Endothelial cell of umbilical vein (primary cell): ENCODE measurements at regions of chr17 and their contacts with region 1.

Region 1: DNA sequence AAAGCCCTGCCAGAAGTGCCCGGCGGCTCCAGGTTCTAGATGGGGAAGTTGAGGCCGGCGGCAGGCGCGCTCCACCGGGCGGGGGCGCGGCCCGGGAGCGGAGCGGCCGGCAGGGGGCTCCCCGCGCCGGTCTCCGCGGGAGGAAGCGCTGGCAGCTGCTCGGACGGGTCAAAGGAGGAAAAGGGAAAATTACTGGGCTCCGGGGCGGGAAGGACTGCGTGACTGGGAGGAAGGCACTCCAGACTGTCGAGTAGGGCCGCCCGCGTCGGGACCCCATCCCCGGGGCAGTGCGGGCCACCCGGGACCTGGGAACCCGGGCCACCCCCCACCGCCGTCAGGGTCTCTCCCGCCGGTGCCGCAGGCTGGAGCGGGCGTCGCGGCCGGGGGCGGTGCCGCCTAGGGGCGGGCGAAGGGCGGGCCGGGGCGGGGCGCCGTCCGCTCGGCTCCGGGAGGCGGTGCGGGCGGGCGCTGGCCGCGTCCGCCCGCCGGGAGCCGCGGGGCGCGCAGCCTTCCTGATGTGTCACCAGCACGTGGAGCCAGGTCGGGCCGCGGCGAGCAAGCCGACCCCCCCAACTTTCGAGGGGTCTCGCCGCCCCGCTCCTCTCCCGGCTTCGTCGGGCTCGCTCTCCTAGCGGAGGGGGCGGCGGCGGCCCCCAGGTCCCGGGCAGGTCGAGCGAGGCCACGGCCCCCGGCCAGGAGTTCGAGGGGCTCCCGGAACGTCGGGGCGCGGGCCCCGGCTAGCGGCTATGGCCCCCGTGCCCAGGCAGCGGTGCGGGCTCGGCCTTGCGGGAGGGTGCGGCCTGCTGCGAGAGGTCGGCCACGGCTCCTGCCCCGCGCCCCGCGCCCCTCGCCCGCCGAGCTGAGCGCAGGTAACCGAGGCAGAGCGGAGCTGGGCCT is 167.5 kb downstream of the RAB11FIP4 start:
- DNase-seq: peak; percentile 81
- H3K4me3 ChIP-seq: peak overlapping the region; percentile 43 to 89 (median 51)
- H3K27ac ChIP-seq: peak overlapping the region; percentile 91
- H3K4me1 ChIP-seq: peaks cover 21% of the 10 kb centered on the region
- H3K27me3 ChIP-seq: peaks cover 0 to 2% of the 10 kb centered on the region in 2 experiments
- CTCF ChIP-seq: peak; percentile 65 to 94
- POLR2A ChIP-seq: peak; percentile 82

Region 2: GRCh38 chr17:31573866-31574265 is 14.9 kb after region 1 on chr17:
- CTCF ChIA-PET with region 1: interaction called, 14 read pairs
- POLR2A ChIA-PET with region 1: no interaction called
- dilution Hi-C with region 1: no loop called
- intact Hi-C with region 1: no loop called
- DNase-seq: no peak
- H3K4me3 ChIP-seq: no peak overlapping the region
- H3K27ac ChIP-seq: no peak overlapping the region
- H3K4me1 ChIP-seq: peaks cover 4% of the 10 kb centered on the region
- H3K27me3 ChIP-seq: no peaks in the 10 kb centered on the region
- CTCF ChIP-seq: no peak
- POLR2A ChIP-seq: no peak

Region 3: DNA sequence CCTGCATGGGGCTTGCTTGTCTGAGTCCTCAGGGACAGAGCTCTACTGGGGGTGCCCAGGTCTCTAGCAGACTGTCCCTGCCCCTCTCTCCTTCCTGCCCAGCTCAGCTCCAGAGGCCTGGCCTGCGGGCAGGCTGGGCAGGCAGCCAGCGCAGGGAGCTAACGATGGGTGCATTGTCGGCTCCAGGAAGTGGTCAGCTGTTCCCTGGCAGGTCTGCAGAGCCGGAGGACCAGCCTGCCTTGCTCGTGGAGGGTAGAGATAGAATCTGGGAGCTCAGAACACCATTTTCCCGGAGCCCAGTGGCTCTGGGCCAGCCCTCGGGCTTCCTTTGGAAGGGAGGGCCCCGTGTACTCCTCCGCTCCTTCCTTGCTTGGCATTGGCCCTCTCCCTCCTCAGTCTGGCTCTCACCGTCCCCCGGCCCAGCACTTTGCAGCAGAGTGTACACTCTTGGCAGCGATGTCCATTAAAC is 22.1 kb after region 1 on chr17:
- CTCF ChIA-PET with region 1: interaction called, 19 read pairs
- POLR2A ChIA-PET with region 1: interaction called, 8 read pairs
- dilution Hi-C with region 1: no loop called
- intact Hi-C with region 1: loop called (anchors 1 kb)
- DNase-seq: peak; percentile 78
- H3K4me3 ChIP-seq: no peak overlapping the region
- H3K27ac ChIP-seq: peak overlapping the region; percentile 59
- H3K4me1 ChIP-seq: peaks cover 57% of the 10 kb centered on the region
- H3K27me3 ChIP-seq: no peaks in the 10 kb centered on the region
- CTCF ChIP-seq: no peak
- POLR2A ChIP-seq: peak; percentile 38

Region 4: DNA sequence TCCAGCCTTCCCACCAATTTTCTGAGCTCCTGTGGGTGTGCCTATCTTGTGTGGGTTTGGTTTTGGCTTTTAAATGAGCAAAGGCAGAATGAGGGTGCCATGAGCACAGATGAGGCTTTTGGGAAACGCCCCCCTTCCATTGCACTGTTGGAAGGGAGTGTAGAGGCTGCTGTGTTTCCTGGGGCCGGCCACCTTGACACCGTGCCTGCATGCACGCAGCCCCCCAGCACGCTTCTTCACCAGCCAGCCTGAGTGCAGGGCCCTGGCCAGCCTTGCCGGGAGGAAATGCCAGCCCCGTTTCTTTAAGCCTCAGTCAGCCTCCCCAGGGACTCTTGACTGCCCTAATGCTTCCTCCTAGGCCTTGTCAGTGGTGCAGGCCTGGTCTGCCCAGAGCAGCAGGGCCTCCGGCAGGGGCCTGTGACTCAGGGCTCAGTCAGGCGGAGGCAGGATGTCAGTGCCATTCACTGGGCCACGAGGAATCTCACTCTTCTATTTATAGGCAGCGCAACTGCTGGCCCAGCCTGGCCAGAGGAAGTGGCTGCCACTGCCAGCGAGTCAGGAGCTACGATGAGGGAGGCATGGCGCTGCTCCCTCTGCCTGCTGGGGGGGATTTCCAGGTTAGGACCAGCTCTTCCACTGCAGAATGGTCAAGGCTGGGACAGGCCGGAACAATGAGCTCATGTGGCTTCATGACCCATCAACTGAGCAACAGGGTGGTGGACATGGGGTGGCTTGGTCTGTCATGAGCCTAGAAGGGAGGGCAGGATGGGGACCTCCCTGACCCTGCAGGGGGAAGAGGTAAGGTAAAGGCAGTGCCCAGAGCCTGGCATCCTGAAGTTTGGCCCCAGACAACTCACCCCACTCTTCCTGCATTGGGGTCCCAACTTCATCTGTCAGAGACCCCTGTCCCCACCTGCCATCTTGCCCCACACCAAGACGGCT is 37.7 kb after region 1 on chr17:
- CTCF ChIA-PET with region 1: interaction called, 6 read pairs
- POLR2A ChIA-PET with region 1: no interaction called
- dilution Hi-C with region 1: no loop called
- intact Hi-C with region 1: loop called (anchors 1 kb)
- DNase-seq: peak; percentile 96
- H3K4me3 ChIP-seq: no peak overlapping the region
- H3K27ac ChIP-seq: peak overlapping the region; percentile 79
- H3K4me1 ChIP-seq: peaks cover 18% of the 10 kb centered on the region
- H3K27me3 ChIP-seq: no peaks in the 10 kb centered on the region
- CTCF ChIP-seq: no peak
- POLR2A ChIP-seq: peak; percentile 14

Region 5: DNA sequence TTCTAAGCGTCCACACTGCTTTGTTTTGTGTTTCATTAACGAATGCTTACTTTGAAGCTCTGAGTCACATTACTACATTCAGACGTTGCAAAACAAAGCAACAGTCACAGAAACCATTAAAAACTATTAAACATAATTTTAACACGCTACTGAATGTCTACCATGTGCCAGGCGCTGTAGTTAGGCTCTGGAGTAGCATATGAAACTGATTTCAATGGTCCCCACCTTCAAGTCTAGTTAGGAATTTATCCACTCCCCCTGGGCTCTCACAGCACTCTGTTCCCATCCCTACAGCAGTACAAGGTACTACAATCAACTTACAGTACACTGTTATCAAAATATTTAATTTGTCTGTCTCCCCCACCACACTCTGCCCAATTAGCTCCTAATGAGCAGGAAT is 341.9 kb after region 1 on chr17:
- CTCF ChIA-PET with region 1: interaction called, 5 read pairs
- POLR2A ChIA-PET with region 1: no interaction called
- dilution Hi-C with region 1: no loop called
- intact Hi-C with region 1: loop called (anchors 1 kb)
- DNase-seq: no peak
- H3K4me3 ChIP-seq: peak overlapping the region; percentile 71 to 92 (median 71)
- H3K27ac ChIP-seq: no peak overlapping the region
- H3K4me1 ChIP-seq: peaks cover 5% of the 10 kb centered on the region
- H3K27me3 ChIP-seq: no peaks in the 10 kb centered on the region
- CTCF ChIP-seq: no peak
- POLR2A ChIP-seq: no peak